A549 (cell line): ENCODE measurements at regions of chr12 and their contacts with region 1.

Region 1: GRCh38 chr12:105107494-105108371 is at the start of gene WASHC4:
- DNase-seq: peak; percentile 94 to 97
- ATAC-seq: peak; percentile 93 to 96
- H3K4me3 ChIP-seq: peak within 1 kb of the TSS; percentile 75
- H3K27ac ChIP-seq: peak within 1 kb of the TSS; percentile 90 to 95
- H3K4me1 ChIP-seq: peaks cover 18% of the 10 kb centered on the region; the same call in 2 of the 3 replicates
- CTCF ChIP-seq: no peak
- EP300 ChIP-seq: no peak; a peak in 1 of 5 replicates
- POLR2A ChIP-seq: peak; percentile 97
- RAD21 ChIP-seq: no peak; a peak in 1 of 5 replicates
- polyA plus RNA-seq, gene WASHC4: 51.5 and 67.6 TPM in 2 replicates

Region 2: GRCh38 chr12:104328790-104329189 is 778.9 kb before region 1 on chr12:
- CTCF ChIA-PET with region 1: no interaction called
- POLR2A ChIA-PET with region 1: interaction called, 10 read pairs
- DNase-seq: no peak
- ATAC-seq: no peak
- H3K4me3 ChIP-seq: no peak overlapping the region
- H3K27ac ChIP-seq: no peak overlapping the region
- H3K4me1 ChIP-seq: peaks cover 100% of the 10 kb centered on the region
- CTCF ChIP-seq: no peak
- EP300 ChIP-seq: no peak
- POLR2A ChIP-seq: no peak
- RAD21 ChIP-seq: no peak

Region 3: GRCh38 chr12:105036937-105037649 is 70.6 kb before region 1 on chr12:
- CTCF ChIA-PET with region 1: no interaction called
- POLR2A ChIA-PET with region 1: no interaction called
- DNase-seq: no peak
- ATAC-seq: no peak
- H3K4me3 ChIP-seq: no peak overlapping the region
- H3K27ac ChIP-seq: no peak overlapping the region
- H3K4me1 ChIP-seq: peaks cover 7% of the 10 kb centered on the region; the same call in 2 of the 3 replicates
- CTCF ChIP-seq: no peak
- EP300 ChIP-seq: no peak
- POLR2A ChIP-seq: no peak
- RAD21 ChIP-seq: no peak

Region 4: DNA sequence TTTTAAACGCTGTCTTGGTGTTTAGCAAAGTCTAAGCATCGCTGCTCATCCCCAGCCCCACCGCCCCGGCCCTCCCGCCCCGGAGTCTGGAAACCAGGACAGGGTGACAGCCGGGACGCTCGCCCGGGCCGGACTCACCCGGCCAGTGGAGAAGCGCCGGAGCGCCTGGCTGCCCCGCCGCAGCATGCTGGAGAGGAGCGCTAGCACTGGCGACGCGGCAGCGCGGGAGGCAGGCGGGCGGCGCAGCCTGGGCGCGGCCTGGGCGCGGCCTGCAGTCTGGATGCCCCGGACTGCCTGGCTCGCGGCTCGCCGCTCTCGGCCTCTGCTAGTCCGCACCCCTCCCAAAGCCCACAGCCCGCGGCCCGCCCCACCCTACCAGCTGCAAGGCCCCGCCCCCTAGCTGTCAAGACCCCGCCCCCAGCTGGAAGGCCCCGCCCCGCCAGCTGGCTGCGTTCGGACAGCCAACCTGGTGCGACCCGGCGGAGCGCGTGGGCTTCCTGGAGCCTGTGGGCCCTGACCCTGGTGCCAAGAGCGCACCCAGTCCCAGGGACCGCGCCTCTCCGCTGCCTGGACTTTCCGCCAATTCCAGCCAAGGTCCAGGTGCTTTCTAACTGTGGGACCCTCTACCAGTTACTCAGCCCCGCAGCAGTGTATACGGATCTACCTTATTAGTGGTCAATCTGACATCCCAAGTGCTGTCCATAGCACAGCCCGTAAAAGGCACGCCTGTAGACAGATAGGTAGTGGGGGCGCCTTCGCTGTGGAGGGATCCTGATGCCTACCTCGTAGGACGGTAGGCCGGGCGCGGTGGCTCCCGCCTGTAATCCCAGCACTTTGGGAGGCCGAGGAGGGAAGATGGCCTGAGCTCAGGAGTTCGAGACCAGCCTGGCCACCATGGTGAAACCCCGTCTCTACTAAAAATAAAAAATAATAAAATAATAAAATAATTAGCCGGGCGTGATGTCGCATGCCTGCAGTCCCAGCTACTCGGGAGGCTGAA is 23.2 kb before region 1 on chr12 and contains the start of gene ALDH1L2:
- CTCF ChIA-PET with region 1: interaction called, 4 read pairs
- POLR2A ChIA-PET with region 1: interaction called, 18 read pairs
- DNase-seq: peak; percentile 58 to 90
- ATAC-seq: peak; percentile 95 to 99
- H3K4me3 ChIP-seq: peak within 1 kb of the TSS; percentile 64
- H3K27ac ChIP-seq: peak within 1 kb of the TSS; percentile 77 to 89
- H3K4me1 ChIP-seq: 0 out of 3 replicates have a peak, but pooled peaks cover 6% of the 10 kb centered on the region
- CTCF ChIP-seq: no peak
- EP300 ChIP-seq: no peak
- POLR2A ChIP-seq: peak; percentile 47; the same call in 1 of the 2 replicates
- RAD21 ChIP-seq: no peak
- polyA plus RNA-seq, gene ALDH1L2: 25.2 and 28.1 TPM in 2 replicates